A673 (cell line): ENCODE measurements at regions of chr1 and their contacts with region 1.

Region 1: DNA sequence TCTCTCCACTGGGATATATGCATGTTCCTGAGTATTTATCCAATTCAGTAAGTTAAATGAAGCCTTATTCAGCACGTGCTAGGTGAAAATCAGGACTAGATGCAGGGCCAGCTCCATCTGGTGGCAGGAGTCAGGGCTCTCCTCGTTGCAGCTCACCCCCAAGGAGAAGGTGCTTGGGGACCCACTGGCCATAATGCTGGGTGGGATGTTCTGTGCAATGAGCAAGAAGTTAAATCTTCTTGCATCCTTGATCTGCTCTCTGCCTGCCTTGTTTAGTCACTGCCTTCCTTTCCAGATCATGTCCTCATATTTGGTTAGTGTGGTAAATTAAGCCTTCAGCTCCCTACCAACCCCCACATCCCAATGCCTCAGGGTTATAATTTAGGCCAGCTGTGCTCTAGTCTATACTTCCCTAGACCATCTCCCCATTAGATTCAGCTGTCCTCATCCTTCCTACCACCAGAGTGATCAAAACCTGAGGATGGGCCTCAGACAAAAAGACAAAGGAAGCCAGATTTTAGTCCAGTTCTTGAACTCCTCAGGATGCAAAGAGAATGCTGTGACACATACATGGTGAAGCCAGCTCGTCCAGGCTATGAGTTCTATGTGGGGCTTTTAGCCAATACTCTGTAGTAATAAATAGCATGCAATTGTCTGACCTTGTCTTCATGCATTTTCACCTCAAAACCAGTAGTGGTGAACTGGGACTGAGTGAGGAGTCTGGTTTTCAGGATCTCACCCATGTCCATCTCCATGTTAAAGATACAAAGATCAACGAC is 55.9 kb downstream of the SEC16B start:
- DNase-seq: peak; percentile 84
- H3K4me3 ChIP-seq: no peak overlapping the region
- H3K27ac ChIP-seq: no peak overlapping the region
- H3K4me1 ChIP-seq: peaks cover 6% of the 10 kb centered on the region
- H3K27me3 ChIP-seq: no peaks in the 10 kb centered on the region
- CTCF ChIP-seq: peak; percentile 82

Region 2: DNA sequence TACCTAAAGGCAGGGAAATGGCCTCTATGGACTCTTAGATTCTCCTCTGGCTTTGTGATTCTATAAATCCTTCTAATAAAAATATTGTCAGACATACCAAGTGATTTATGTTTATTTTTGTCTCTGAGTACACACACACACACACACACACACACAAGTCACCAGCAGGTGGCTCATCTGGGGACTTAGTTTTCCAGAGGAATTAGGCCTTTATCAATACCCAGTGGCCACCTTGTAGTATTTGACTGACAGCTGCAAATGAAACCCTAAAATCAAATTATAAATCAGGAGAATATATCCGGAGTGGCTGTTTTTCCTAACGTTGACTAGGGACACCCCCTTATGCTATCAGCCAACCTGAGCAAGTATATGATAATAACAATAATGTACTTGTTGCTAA is 484.7 kb before region 1 on chr1:
- CTCF ChIA-PET with region 1: no interaction called
- POLR2A ChIA-PET with region 1: no interaction called
- intact Hi-C with region 1: loop called (anchors 10 kb)
- DNase-seq: no peak
- H3K4me3 ChIP-seq: no peak overlapping the region
- H3K27ac ChIP-seq: no peak overlapping the region
- H3K4me1 ChIP-seq: peaks cover 19% of the 10 kb centered on the region
- H3K27me3 ChIP-seq: no peaks in the 10 kb centered on the region
- CTCF ChIP-seq: peak; percentile 30; the same call in 1 of the 2 replicates

Region 3: GRCh38 chr1:177561436-177561835 is 352.5 kb before region 1 on chr1:
- CTCF ChIA-PET with region 1: no interaction called
- POLR2A ChIA-PET with region 1: no interaction called
- intact Hi-C with region 1: no loop called
- DNase-seq: peak; percentile 73
- H3K4me3 ChIP-seq: no peak overlapping the region
- H3K27ac ChIP-seq: no peak overlapping the region
- H3K4me1 ChIP-seq: no peaks in the 10 kb centered on the region
- H3K27me3 ChIP-seq: no peaks in the 10 kb centered on the region
- CTCF ChIP-seq: no peak

Region 4: GRCh38 chr1:177953549-177953948 is 39.6 kb after region 1 on chr1:
- CTCF ChIA-PET with region 1: no interaction called
- POLR2A ChIA-PET with region 1: no interaction called
- intact Hi-C with region 1: no loop called
- DNase-seq: no peak
- H3K4me3 ChIP-seq: no peak overlapping the region
- H3K27ac ChIP-seq: no peak overlapping the region
- H3K4me1 ChIP-seq: peaks cover 21% of the 10 kb centered on the region
- H3K27me3 ChIP-seq: no peaks in the 10 kb centered on the region
- CTCF ChIP-seq: no peak